Ascending aorta (tissue), 2 donors: ENCODE measurements at regions of chr4 and their contacts with region 1.

Region 1: GRCh38 chr4:147570616-147571015 is 46.6 kb upstream of the TMEM184C start:
- DNase-seq: no peak
- H3K4me3 ChIP-seq: no peak overlapping the region
- H3K27ac ChIP-seq: no peak overlapping the region
- H3K4me1 ChIP-seq: no peaks in the 10 kb centered on the region
- H3K27me3 ChIP-seq: no peaks in the 10 kb centered on the region
- CTCF ChIP-seq: peak in 1 of 3 experiments; percentile 35

Region 2: DNA sequence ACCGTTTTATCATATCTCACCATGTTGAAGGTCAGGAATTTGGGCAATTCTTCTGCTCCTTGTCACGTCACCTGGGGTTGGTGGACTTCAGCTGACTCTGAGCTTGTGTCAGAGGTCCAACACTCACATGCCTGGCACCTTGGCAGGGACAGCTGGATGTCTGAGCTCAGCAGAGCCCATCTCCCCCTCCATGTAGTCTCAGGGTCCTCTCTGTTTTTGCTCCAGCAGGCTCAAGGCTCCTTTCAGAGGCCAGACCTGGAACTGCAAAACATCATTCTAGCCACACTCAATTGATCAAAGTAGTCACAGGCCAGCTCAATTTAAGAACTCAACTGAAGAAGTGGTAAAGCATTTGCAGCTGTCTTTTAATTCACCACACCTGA is 44.4 kb before region 1 on chr4:
- intact Hi-C with region 1: loop called (anchors 5 kb)
- DNase-seq: no peak
- H3K4me3 ChIP-seq: no peak overlapping the region
- H3K27ac ChIP-seq: no peak overlapping the region
- H3K4me1 ChIP-seq: no peaks in the 10 kb centered on the region
- H3K27me3 ChIP-seq: no peaks in the 10 kb centered on the region
- CTCF ChIP-seq: no peak

Region 3: GRCh38 chr4:147617173-147617840 is 46.7 kb after region 1 on chr4 and contains the start of gene TMEM184C:
- intact Hi-C with region 1: no loop called
- DNase-seq: peak; percentile 96 to 99
- H3K4me3 ChIP-seq: peak within 1 kb of the TSS; percentile 82 to 91
- H3K27ac ChIP-seq: peak within 1 kb of the TSS; percentile 64 to 84
- H3K4me1 ChIP-seq: peaks cover 0 to 20% of the 10 kb centered on the region in 2 donors
- H3K27me3 ChIP-seq: no peaks in the 10 kb centered on the region
- CTCF ChIP-seq: peak in 1 of 3 experiments; percentile 6
- total RNA-seq, gene TMEM184C: 14.2 TPM